GM18951 (cell line): ENCODE measurements at regions of chr6 and their contacts with region 1.

Region 1: DNA sequence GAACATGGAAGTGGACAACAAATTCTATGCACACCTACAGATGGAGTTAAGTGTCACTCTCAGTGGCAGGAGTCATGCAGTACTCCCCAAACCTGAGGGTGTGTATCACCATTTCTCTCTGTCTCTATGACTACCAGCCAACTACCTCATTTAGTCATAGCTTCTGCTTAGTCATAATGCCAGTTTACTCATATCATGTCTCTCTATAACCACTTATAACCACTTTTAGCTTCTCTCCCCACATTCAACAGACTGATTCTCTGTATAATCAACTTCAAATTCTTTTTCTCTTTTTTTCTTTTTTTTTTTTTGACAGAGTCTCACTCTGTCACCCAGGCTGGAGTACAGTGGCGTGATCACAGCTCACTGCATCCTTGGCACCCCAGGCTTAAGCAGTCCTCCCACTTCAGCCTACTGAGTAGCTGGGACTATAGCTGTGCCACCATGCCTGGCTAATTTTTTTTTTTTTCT is 13.8 kb upstream of the GTF3C6 start:
- POLR2A ChIP-seq: no peak

Region 2: GRCh38 chr6:110528101-110528929 is 416.4 kb before region 1 on chr6:
- in situ Hi-C with region 1: loop called (anchors 10 kb)
- POLR2A ChIP-seq: no peak

Region 3: GRCh38 chr6:110682460-110682853 is 262.3 kb before region 1 on chr6:
- in situ Hi-C with region 1: loop called (anchors 10 kb)
- POLR2A ChIP-seq: no peak